Endothelial cell of umbilical vein (primary cell): ENCODE measurements at regions of chr14 and their contacts with region 1.

Region 1: GRCh38 chr14:55051426-55052268 is at the start of gene MAPK1IP1L:
- DNase-seq: peak; percentile 95
- H3K4me3 ChIP-seq: peak within 1 kb of the TSS; percentile 33 to 85 (median 78)
- H3K27ac ChIP-seq: peak within 1 kb of the TSS; percentile 100
- H3K4me1 ChIP-seq: peaks cover 17% of the 10 kb centered on the region
- H3K27me3 ChIP-seq: no peaks in the 10 kb centered on the region
- CTCF ChIP-seq: peak; percentile 95 to 100
- POLR2A ChIP-seq: peak; percentile 98
- total RNA-seq, gene MAPK1IP1L: 129 and 139 TPM in 2 replicates

Region 2: DNA sequence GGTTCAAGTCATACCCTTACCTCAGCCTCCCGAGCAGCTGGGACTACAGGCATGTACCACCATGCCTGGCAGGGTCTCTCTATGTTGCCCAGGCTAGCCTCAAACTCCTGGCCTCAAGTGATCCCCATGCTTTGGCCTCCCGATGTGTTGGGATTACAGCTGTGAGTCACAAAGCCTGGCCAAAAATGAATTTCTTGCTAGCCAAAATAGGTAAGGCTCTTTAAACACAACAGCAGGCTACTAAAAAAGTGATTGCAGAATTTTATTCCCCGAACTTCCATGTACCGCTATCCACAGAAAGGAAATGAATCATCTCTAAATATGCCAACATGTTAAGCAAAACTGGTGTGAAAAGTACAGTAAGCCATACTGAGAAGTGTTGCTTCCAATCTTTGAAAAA is 75.3 kb before region 1 on chr14:
- CTCF ChIA-PET with region 1: interaction called, 3 read pairs
- POLR2A ChIA-PET with region 1: no interaction called
- dilution Hi-C with region 1: no loop called
- intact Hi-C with region 1: loop called (anchors 2 kb)
- DNase-seq: peak; percentile 70
- H3K4me3 ChIP-seq: no peak overlapping the region
- H3K27ac ChIP-seq: peak overlapping the region; percentile 62
- H3K4me1 ChIP-seq: peaks cover 13% of the 10 kb centered on the region
- H3K27me3 ChIP-seq: no peaks in the 10 kb centered on the region
- CTCF ChIP-seq: no peak
- POLR2A ChIP-seq: no peak

Region 3: GRCh38 chr14:55026793-55027561 is 24.7 kb before region 1 on chr14 and contains the starts of genes SOCS4 and WDHD1:
- CTCF ChIA-PET with region 1: interaction called, 42 read pairs
- POLR2A ChIA-PET with region 1: interaction called, 10 read pairs
- dilution Hi-C with region 1: no loop called
- intact Hi-C with region 1: loop called (anchors 1 kb)
- DNase-seq: peak; percentile 97
- H3K4me3 ChIP-seq: peak within 1 kb of the TSS; percentile 68 to 96 (median 86)
- H3K27ac ChIP-seq: peak within 1 kb of the TSS; percentile 61
- H3K4me1 ChIP-seq: peaks cover 30% of the 10 kb centered on the region
- H3K27me3 ChIP-seq: no peaks in the 10 kb centered on the region
- CTCF ChIP-seq: no peak
- POLR2A ChIP-seq: peak; percentile 77
- total RNA-seq, gene SOCS4: 26.7 and 28.7 TPM in 2 replicates
- total RNA-seq, gene WDHD1: 22.5 TPM in 2 replicates

Region 4: DNA sequence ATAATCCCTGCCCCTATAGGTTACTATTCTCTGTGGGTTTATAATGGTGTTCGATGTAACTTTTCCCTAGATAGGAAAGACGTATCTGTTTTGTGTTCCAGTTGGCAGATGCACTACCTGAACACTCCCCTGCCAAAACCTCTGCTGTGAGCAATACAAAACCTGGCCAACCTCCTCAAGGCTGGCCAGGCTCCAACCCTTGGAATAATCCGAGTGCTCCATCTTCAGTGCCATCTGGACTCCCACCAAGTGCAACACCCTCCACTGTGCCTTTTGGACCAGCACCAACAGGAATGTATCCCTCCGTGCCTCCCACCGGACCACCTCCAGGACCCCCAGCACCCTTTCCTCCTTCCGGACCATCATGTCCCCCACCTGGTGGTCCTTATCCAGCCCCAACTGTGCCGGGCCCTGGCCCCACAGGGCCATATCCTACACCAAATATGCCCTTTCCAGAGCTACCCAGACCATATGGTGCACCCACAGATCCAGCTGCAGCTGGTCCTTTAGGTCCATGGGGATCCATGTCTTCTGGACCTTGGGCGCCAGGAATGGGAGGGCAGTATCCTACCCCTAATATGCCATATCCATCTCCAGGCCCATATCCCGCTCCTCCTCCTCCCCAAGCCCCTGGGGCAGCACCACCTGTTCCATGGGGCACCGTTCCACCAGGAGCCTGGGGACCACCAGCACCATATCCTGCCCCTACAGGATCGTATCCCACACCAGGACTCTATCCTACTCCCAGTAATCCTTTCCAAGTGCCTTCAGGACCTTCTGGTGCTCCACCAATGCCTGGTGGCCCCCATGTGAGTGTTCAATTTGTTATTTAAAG is 11.1 kb after region 1 on chr14:
- CTCF ChIA-PET with region 1: interaction called, 14 read pairs
- POLR2A ChIA-PET with region 1: interaction called, 3 read pairs
- dilution Hi-C with region 1: no loop called
- intact Hi-C with region 1: no loop called
- DNase-seq: no peak
- H3K4me3 ChIP-seq: no peak overlapping the region
- H3K27ac ChIP-seq: no peak overlapping the region
- H3K4me1 ChIP-seq: no peaks in the 10 kb centered on the region
- H3K27me3 ChIP-seq: no peaks in the 10 kb centered on the region
- CTCF ChIP-seq: no peak
- POLR2A ChIP-seq: no peak

Region 5: GRCh38 chr14:55102141-55102621 is 50.5 kb after region 1 on chr14:
- CTCF ChIA-PET with region 1: interaction called, 6 read pairs
- POLR2A ChIA-PET with region 1: no interaction called
- dilution Hi-C with region 1: no loop called
- intact Hi-C with region 1: loop called (anchors 1 kb)
- DNase-seq: peak; percentile 98
- H3K4me3 ChIP-seq: no peak overlapping the region
- H3K27ac ChIP-seq: peak overlapping the region; percentile 98
- H3K4me1 ChIP-seq: peaks cover 26% of the 10 kb centered on the region
- H3K27me3 ChIP-seq: no peaks in the 10 kb centered on the region
- CTCF ChIP-seq: no peak
- POLR2A ChIP-seq: peak; percentile 58

Region 6: GRCh38 chr14:55129428-55130195 is 78.0 kb after region 1 on chr14:
- CTCF ChIA-PET with region 1: no interaction called
- POLR2A ChIA-PET with region 1: no interaction called
- dilution Hi-C with region 1: no loop called
- intact Hi-C with region 1: loop called (anchors 1 kb)
- DNase-seq: peak; percentile 61
- H3K4me3 ChIP-seq: peak overlapping the region; percentile 4 to 56 (median 20)
- H3K27ac ChIP-seq: peak overlapping the region; percentile 3
- H3K4me1 ChIP-seq: peaks cover 3% of the 10 kb centered on the region
- H3K27me3 ChIP-seq: no peaks in the 10 kb centered on the region
- CTCF ChIP-seq: no peak
- POLR2A ChIP-seq: no peak

Region 7: DNA sequence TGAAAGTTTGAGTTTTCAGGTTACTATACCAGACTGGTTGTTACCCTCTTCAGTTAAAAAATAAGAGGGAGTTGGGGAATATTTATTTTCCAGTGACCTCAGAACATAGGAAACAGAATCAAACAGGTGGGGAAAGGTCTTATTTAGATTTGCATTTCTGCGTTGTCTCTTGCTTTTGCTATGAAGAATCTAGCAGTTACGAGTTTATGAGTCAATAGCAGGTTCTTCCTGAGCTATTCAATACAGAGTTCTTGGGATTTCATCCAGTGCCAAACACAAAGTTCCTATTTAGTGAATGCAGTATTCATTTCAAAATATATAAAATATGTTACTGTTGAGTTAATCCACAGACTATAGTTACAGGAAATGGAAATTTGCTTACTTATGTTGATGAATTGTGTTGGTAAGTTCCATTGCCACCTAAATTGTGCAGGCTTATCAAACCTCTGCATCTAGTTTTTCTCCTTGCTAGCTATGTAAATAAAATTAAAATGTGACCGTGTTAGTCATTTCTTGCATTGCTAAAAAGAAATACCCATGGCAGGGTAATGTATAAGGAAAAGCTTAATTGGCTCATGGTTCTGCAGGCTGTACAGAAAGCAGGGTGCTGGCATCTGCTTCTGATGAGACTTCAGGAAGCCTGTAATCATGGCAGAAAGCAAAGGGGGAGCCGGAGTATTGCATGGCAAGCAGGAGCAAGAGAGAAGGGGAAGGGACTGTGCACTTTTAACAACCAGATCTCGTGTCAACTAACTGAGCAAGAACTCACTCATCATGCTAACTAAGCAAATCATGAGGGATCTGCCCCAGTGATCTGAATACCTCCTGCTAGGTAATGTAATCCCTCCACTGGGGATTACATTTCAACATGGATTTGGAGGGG is 638.6 kb after region 1 on chr14:
- CTCF ChIA-PET with region 1: no interaction called
- POLR2A ChIA-PET with region 1: no interaction called
- dilution Hi-C with region 1: no loop called
- intact Hi-C with region 1: no loop called
- DNase-seq: peak; percentile 73
- H3K4me3 ChIP-seq: peak overlapping the region in 2 of 3 experiments; percentile 11 to 47
- H3K27ac ChIP-seq: peak overlapping the region; percentile 80
- H3K4me1 ChIP-seq: peaks cover 20% of the 10 kb centered on the region
- H3K27me3 ChIP-seq: no peaks in the 10 kb centered on the region
- CTCF ChIP-seq: no peak
- POLR2A ChIP-seq: no peak